ENCODE measurements at regions of chr20 and their contacts with region 1.

Region 1: DNA sequence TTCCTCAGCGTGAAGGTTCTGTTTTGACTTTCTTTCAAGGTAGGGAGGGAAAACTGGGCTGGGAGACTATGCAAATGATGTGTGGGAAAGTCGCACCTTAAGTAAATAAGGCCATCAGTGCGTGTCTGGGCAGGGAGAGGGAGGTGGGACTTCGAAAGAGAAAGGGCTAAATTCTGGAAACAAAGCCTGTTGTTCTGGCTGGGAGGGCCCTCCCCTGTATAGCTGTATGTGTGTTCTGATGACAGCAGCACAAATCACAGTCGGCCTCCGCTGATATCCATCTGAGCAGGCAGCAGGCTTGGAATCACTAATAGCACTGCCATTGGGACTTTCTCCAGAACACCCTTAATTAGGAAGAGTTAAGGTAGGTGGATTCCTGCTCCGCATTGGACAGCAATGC is 19.2 kb downstream of the JAG1 start:
- DNase-seq: peak; percentile 56
- H3K4me3 ChIP-seq: no peak overlapping the region
- H3K27ac ChIP-seq: peak overlapping the region; percentile 27
- H3K4me1 ChIP-seq: peaks cover 30% of the 10 kb centered on the region
- H3K27me3 ChIP-seq: no peaks in the 10 kb centered on the region
- CTCF ChIP-seq: no peak
- POLR2A ChIP-seq: no peak

Region 2: DNA sequence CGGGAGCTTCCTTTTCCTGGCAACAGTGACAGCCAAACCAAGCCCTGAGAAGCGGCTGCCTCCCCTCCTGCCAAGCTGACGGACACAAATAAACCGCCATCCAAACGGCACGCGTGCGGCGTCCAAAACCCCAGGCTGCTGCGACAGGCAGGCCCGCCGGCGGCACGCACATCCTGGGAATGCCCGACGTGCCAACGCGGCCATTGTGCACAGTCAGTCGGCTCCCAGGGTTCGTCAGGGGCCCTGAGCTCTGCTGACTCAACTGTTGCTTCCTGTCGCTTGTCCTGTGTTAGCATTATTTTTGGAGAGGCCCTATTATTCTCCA is 12.4 kb after region 1 on chr20:
- CTCF ChIA-PET with region 1: interaction called, 20 read pairs
- POLR2A ChIA-PET with region 1: no interaction called
- dilution Hi-C with region 1: no loop called
- intact Hi-C with region 1: loop called (anchors 2 kb)
- DNase-seq: peak; percentile 89
- H3K4me3 ChIP-seq: no peak overlapping the region
- H3K27ac ChIP-seq: peak overlapping the region; percentile 94
- H3K4me1 ChIP-seq: peaks cover 67% of the 10 kb centered on the region
- H3K27me3 ChIP-seq: no peaks in the 10 kb centered on the region
- CTCF ChIP-seq: no peak
- POLR2A ChIP-seq: no peak

Region 3: GRCh38 chr20:10689385-10689784 is 34.8 kb after region 1 on chr20:
- CTCF ChIA-PET with region 1: no interaction called
- POLR2A ChIA-PET with region 1: no interaction called
- dilution Hi-C with region 1: no loop called
- intact Hi-C with region 1: no loop called
- DNase-seq: no peak
- H3K4me3 ChIP-seq: no peak overlapping the region
- H3K27ac ChIP-seq: no peak overlapping the region
- H3K4me1 ChIP-seq: no peaks in the 10 kb centered on the region
- H3K27me3 ChIP-seq: no peaks in the 10 kb centered on the region
- CTCF ChIP-seq: no peak
- POLR2A ChIP-seq: no peak

Region 4: DNA sequence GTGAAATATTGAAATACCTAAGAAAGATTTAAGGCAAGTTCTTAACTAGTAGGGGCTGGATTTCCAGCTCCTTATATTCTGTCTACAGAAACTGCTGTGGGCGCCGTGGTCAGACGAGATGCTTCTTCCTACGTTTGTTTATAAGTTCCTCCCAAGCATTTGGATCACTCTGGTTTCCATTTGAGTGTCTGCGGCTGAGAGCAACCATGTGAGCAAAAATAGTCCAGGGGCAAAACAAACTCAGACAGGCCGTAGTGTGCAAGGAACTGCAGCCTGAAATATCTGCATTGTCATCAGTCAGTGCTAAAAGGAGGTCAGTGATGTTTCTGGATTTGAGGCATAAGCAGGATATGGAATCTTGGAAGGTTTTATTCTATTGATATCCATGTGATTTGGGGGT is 505.1 kb after region 1 on chr20:
- CTCF ChIA-PET with region 1: no interaction called
- POLR2A ChIA-PET with region 1: no interaction called
- dilution Hi-C with region 1: no loop called
- intact Hi-C with region 1: no loop called
- DNase-seq: peak; percentile 72
- H3K4me3 ChIP-seq: no peak overlapping the region
- H3K27ac ChIP-seq: no peak overlapping the region
- H3K4me1 ChIP-seq: peaks cover 38% of the 10 kb centered on the region
- H3K27me3 ChIP-seq: no peaks in the 10 kb centered on the region
- CTCF ChIP-seq: no peak
- POLR2A ChIP-seq: no peak

Region 5: GRCh38 chr20:11274141-11274594 is 619.5 kb after region 1 on chr20:
- CTCF ChIA-PET with region 1: no interaction called
- POLR2A ChIA-PET with region 1: no interaction called
- dilution Hi-C with region 1: no loop called
- intact Hi-C with region 1: loop called (anchors 5 kb)
- DNase-seq: peak; percentile 74
- H3K4me3 ChIP-seq: no peak overlapping the region
- H3K27ac ChIP-seq: no peak overlapping the region
- H3K4me1 ChIP-seq: no peaks in the 10 kb centered on the region
- H3K27me3 ChIP-seq: no peaks in the 10 kb centered on the region
- CTCF ChIP-seq: peak; percentile 42 to 46
- POLR2A ChIP-seq: no peak

Measured in endothelial cell of umbilical vein (primary cell).